Esophagus muscularis mucosa (tissue), 4 donors: ENCODE measurements at regions of chr14 and their contacts with region 1.

Region 1: DNA sequence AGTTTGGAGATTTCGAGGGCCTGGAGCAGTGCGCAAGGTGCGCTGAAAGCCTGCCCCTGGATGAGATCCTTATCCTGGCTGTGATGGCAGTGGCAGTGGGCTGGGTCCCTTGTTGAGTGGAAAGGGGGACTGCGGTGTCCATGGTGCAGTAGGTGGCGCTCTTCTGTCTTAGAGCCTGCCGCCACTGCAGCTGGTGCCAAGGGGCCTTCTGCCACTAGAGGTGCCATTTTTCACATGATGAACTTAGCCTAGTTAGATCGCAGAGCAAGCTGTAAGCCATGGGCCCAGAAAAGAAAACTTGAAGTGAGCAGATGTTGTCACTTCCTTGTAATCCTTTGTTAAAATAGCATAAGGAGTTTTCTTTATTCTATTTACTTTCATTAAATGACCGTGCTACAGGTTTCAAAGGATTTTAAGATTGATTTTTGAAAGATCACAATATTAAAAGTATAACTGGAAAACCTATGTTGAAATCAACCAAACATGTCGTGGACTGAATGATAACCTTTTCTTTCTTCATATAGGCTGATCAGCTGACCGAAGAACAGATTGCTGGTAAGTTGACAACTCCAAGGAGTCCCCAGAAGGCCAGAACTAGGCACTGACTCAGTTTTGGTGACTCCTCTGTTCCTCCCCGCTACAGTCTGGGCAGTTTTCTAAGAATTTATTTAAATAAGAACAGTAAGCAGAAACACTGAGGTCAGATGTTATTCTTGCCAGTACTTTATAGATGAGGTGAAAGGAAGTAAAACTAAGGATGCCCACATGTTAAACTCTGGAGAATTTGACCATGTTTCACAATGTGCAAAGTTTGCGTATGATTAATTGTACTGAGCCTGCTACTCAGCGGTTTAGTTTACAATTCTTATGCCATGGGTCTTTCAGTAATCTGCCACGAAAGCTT is 3.0 kb downstream of the CALM1 start:
- DNase-seq: peak; percentile 96
- H3K4me3 ChIP-seq: peak overlapping the region; percentile 81 to 99 (median 82)
- H3K27ac ChIP-seq: peak overlapping the region; percentile 94 to 97 (median 96)
- H3K4me1 ChIP-seq: peaks cover 49 to 68% (median 65%) of the 10 kb centered on the region in 4 donors
- H3K27me3 ChIP-seq: no peaks in the 10 kb centered on the region
- CTCF ChIP-seq: peak in 2 of 3 experiments; percentile 96 to 99
- EP300 ChIP-seq: no peak
- POLR2A ChIP-seq: no peak

Region 2: GRCh38 chr14:89730687-89731086 is 669.1 kb before region 1 on chr14:
- intact Hi-C with region 1: no loop called
- DNase-seq: no peak
- H3K4me3 ChIP-seq: no peak overlapping the region
- H3K27ac ChIP-seq: no peak overlapping the region
- H3K4me1 ChIP-seq: no peaks in the 10 kb centered on the region
- H3K27me3 ChIP-seq: no peaks in the 10 kb centered on the region
- CTCF ChIP-seq: no peak
- EP300 ChIP-seq: no peak
- POLR2A ChIP-seq: no peak

Region 3: DNA sequence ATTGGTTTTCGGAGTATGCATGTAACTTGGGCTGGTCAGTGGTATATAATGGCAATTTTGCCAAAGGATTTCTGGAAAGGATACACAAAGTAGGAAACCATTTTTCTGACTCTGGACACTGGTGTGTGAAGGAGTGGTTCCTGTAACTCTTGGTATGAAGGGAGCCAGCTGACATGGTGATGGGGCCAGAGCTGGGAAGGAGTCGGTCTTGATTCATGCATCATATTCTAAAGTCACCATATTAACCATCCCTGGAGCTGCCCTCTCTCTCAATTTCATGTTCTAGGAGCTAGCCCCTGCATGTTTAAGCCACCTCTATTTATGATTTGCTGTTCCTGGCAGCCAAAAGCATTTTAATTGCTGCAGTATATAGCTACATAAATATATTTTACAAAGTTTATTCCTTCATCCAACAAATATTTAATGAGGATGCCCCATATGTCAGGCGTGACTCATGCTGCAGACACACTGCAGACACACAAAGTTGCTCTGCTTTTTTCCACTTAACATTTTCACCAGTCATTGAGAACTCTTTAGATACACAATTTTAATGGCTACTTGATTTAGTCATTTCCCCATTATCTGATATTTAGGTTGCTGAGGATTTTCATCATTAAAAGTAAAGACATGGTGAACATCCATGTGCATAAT is 222.1 kb before region 1 on chr14:
- intact Hi-C with region 1: no loop called
- DNase-seq: no peak
- H3K4me3 ChIP-seq: no peak overlapping the region
- H3K27ac ChIP-seq: no peak overlapping the region
- H3K4me1 ChIP-seq: no peaks in the 10 kb centered on the region
- H3K27me3 ChIP-seq: no peaks in the 10 kb centered on the region
- CTCF ChIP-seq: no peak
- EP300 ChIP-seq: no peak
- POLR2A ChIP-seq: no peak

Region 4: DNA sequence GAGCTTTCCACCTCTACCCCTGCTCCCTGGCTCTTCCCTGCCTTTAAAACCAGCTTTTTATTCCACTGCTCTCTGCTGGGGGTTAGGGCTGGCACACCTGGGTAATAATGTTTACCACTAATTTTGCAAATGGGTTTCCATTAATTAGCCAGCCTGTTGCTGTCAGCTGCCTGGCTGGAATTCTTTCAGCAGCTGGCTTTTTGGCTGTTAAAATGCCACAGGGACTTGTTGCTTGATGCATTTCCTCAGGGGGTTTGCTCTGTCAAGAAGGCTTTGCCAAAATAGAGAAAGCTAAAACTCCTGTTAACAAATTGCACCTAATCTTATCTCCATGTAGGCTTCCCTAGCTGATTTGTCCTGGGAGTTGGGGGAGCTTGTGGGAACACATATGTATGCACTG is 195.3 kb before region 1 on chr14:
- intact Hi-C with region 1: no loop called
- DNase-seq: no peak
- H3K4me3 ChIP-seq: no peak overlapping the region
- H3K27ac ChIP-seq: no peak overlapping the region
- H3K4me1 ChIP-seq: no peaks in the 10 kb centered on the region
- H3K27me3 ChIP-seq: peaks cover 0 to 3% (median 0%) of the 10 kb centered on the region in 4 donors
- CTCF ChIP-seq: no peak
- EP300 ChIP-seq: no peak
- POLR2A ChIP-seq: no peak

Region 5: DNA sequence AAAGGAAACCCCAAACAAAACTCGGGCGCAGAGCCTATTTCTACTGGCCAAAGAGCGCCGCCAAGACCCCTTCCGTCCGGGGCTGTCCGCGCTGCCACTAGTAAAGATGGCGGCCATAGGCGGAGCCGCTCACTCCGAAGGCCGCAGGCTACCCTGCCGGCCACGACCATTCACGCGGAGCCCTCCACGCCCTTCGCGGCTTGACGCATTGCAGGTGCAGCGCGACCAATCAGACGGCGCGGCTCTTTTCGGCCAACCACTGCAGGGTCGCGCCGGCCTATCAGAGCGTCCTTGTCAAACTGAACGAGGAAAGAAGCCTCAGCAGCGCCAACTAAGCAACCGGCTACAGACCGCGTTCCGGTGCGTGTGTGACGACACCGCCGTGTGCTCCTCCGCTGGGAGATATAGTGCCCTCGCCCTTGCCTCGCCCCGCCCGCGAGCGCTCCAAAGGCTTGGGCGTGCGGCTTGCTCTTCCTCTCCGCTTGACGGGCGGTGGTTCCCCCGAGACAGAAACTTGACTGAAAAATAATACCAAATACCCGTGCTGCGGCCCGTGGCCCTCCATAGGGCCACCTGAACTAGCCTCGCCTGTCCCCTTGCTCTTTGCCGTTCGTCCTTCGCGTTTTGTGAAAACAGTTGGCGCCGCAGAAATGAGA is 16.6 kb before region 1 on chr14:
- intact Hi-C with region 1: loop called (anchors 2 kb)
- DNase-seq: peak; percentile 100
- H3K4me3 ChIP-seq: peak overlapping the region; percentile 60 to 71 (median 70)
- H3K27ac ChIP-seq: peak overlapping the region; percentile 91 to 99 (median 97)
- H3K4me1 ChIP-seq: peaks cover 19 to 35% (median 33%) of the 10 kb centered on the region in 4 donors
- H3K27me3 ChIP-seq: no peaks in the 10 kb centered on the region
- CTCF ChIP-seq: peak in 2 of 3 experiments; percentile 11 to 14
- EP300 ChIP-seq: no peak
- POLR2A ChIP-seq: peak; percentile 92

Region 6: DNA sequence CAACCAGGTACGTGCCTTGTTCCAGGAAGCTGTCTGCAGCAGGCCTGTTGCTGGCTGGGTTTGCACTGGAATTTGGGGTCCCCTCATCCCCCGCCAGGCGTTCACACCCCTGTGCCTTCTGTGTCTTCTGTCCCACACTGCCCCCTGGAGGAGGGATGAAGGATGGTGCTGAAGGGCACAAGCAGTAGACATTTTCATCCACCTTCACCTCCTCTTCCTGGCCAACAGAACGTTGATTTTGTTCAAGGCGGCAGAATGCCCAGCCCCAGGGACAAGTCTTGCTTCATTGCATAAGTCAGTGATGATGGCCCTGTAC is 119.1 kb after region 1 on chr14:
- intact Hi-C with region 1: loop called (anchors 2 kb)
- DNase-seq: no peak
- H3K4me3 ChIP-seq: no peak overlapping the region
- H3K27ac ChIP-seq: peak overlapping the region; percentile 66 to 90 (median 72)
- H3K4me1 ChIP-seq: peaks cover 48 to 83% (median 65%) of the 10 kb centered on the region in 4 donors
- H3K27me3 ChIP-seq: no peaks in the 10 kb centered on the region
- CTCF ChIP-seq: peak; percentile 32 to 55 (median 35)
- EP300 ChIP-seq: no peak
- POLR2A ChIP-seq: no peak

Region 7: DNA sequence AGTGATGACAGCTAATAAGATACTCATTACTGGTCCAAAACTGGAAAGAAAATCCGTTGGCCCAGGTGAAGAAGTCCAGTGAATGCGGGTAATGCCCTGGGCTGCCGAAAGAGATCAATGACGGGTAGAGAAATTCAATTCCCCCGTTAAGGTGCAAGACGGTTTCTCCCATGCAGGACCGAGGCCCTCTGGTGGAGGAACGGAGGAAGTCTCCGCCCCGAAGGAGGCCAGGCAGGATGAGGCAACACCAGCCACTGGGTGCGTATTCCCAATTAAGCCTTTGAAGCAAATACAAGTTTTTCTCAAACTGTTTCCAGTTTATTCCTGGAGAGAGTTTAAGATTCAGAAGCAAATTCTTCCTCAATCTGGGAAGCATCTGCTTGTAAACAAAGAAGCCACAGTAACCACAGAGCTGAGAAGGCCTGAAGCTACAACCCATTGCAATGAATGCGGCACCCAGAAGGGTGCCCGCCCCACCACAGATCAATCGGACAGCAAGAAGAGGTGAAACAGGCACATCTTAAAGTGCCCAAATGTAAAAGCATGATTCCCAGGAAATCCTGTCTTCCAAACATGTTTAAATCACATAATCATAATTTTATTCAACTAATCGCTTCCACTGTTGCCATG is 297.9 kb after region 1 on chr14:
- intact Hi-C with region 1: loop called (anchors 2 kb)
- DNase-seq: peak; percentile 96
- H3K4me3 ChIP-seq: peak overlapping the region in 1 of 4 donors; percentile 14
- H3K27ac ChIP-seq: peak overlapping the region; percentile 71 to 86 (median 82)
- H3K4me1 ChIP-seq: peaks cover 32 to 41% (median 34%) of the 10 kb centered on the region in 4 donors
- H3K27me3 ChIP-seq: no peaks in the 10 kb centered on the region
- CTCF ChIP-seq: peak in 2 of 3 experiments; percentile 95 to 97
- EP300 ChIP-seq: no peak
- POLR2A ChIP-seq: no peak

Region 8: GRCh38 chr14:90758028-90758889 is 358.5 kb after region 1 on chr14:
- intact Hi-C with region 1: loop called (anchors 2 kb)
- DNase-seq: peak; percentile 96
- H3K4me3 ChIP-seq: peak overlapping the region; percentile 50 to 58 (median 54)
- H3K27ac ChIP-seq: peak overlapping the region; percentile 86 to 94 (median 92)
- H3K4me1 ChIP-seq: peaks cover 22 to 32% (median 24%) of the 10 kb centered on the region in 4 donors
- H3K27me3 ChIP-seq: no peaks in the 10 kb centered on the region
- CTCF ChIP-seq: peak; percentile 92 to 95 (median 92)
- EP300 ChIP-seq: no peak
- POLR2A ChIP-seq: no peak